ENCODE measurements at regions of chr18 and their contacts with region 1.

Region 1: GRCh38 chr18:23943104-23943503 is 71.5 kb upstream of the TTC39C start:
- DNase-seq: no peak

Region 2: DNA sequence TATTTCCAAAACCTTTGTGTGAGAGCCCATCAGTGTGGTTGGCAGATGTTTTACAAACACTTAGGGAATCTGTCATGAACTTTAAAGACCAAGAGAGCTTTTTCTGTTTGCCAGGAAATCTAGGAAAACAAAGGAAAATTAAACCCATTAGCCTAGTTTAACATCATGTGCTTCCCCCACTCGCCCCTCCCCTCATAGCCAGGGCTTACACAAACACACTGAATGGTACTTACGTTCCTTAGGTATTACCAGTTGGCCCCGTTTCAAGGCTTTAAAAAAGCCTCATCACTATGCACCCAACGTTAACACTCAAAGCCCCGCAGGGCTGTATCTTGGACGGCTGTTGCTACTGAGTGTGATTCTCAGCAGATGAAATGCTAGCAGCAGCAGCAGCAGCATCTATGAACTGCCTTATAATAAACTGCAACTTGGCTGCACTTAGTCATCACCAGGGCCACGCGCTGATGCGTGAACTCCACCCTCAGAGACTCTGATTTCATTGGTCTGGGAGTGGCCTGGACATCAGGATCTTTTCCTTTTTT is 51.3 kb after region 1 on chr18:
- intact Hi-C with region 1: loop called in 1 of 2 experiments (anchors 10 kb)
- DNase-seq: peak; percentile 90

Region 3: DNA sequence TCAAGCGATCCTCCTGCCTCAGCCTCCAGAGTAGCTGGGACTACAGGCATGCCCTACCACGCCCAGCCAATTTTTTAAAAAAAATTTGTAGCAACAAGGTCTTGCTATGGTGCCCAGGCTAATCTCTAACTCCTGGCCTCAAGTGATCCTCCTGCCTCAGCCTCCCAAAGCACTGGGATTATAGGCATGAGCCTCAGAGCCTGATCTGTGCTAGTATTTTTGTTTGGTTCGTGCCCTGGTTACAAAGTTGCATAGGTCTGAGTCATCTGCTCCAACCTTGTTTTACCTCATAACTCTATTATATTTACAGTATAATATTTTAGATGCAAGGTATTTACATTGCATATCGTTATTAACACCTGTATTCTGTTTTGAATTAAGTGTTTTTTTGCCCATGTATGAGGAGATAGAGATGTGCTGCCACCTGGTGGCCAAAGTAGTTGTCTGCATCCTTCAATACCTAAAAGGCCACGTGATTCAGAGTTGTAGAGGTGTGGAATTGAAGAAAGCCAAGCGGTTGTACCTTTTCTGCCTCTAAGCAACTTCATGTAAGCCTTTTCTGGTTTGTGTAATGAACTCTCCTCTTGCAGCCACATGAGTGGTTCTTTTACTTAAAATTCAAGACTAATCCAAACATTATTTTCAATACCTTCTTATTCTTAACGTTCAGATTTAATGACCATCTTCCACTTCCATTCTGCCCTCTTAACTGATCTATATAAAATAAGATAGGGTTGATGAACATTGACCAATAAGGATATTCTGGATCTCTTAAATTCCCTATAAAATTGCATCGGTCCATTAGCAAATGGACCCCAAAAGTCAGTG is 175.9 kb after region 1 on chr18:
- intact Hi-C with region 1: loop called in 1 of 2 experiments (anchors 10 kb)
- DNase-seq: peak; percentile 87